HepG2 (cell line): ENCODE measurements at regions of chr3 and their contacts with region 1.

Region 1: GRCh38 chr3:159586571-159587202 is 401.9 kb upstream of the IL12A start:
- DNase-seq: peak; percentile 9
- ATAC-seq: peak; percentile 79
- H3K4me3 ChIP-seq: no peak overlapping the region
- H3K27ac ChIP-seq: no peak overlapping the region
- H3K4me1 ChIP-seq: no peaks in the 10 kb centered on the region
- H3K27me3 ChIP-seq: no peaks in the 10 kb centered on the region
- CTCF ChIP-seq: peak; percentile 64
- EP300 ChIP-seq: no peak
- POLR2A ChIP-seq: no peak
- RAD21 ChIP-seq: no peak

Region 2: GRCh38 chr3:158845765-158846350 is 740.8 kb before region 1 on chr3:
- CTCF ChIA-PET with region 1: interaction called, 3 read pairs
- POLR2A ChIA-PET with region 1: no interaction called
- in situ Hi-C with region 1: loop called (anchors 25 kb)
- intact Hi-C with region 1: no loop called
- DNase-seq: peak; percentile 41
- ATAC-seq: peak; percentile 76
- H3K4me3 ChIP-seq: no peak overlapping the region
- H3K27ac ChIP-seq: no peak overlapping the region
- H3K4me1 ChIP-seq: no peaks in the 10 kb centered on the region
- H3K27me3 ChIP-seq: peaks cover 0 to 10% of the 10 kb centered on the region in 2 experiments; a peak in 2 of 5 replicates
- CTCF ChIP-seq: peak; percentile 77
- EP300 ChIP-seq: no peak
- POLR2A ChIP-seq: no peak
- RAD21 ChIP-seq: peak; percentile 61

Region 3: DNA sequence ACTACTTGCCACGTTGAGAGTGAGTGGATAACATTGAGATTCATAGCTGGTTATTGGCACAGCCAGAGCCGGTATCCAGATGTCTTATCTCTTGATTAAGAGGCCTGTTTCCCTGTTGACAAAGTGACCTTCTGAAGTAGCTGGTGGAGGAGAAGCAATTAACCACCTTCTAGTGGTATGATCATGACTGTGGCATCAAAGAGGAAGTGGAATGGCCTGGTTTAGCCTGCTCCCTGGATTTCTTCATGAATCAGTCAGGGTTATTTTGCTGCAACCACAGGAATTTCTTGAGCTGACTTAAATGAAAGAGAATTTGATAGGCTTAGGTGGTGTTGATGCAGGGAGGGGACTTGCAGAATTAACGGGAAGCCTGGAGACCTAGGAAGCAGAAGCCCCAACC is 386.5 kb before region 1 on chr3:
- CTCF ChIA-PET with region 1: no interaction called
- POLR2A ChIA-PET with region 1: no interaction called
- in situ Hi-C with region 1: no loop called
- intact Hi-C with region 1: no loop called
- DNase-seq: no peak
- ATAC-seq: no peak
- H3K4me3 ChIP-seq: no peak overlapping the region
- H3K27ac ChIP-seq: no peak overlapping the region
- H3K4me1 ChIP-seq: no peaks in the 10 kb centered on the region
- H3K27me3 ChIP-seq: no peaks in the 10 kb centered on the region
- CTCF ChIP-seq: no peak
- EP300 ChIP-seq: no peak
- POLR2A ChIP-seq: no peak
- RAD21 ChIP-seq: no peak

Region 4: GRCh38 chr3:159536876-159537275 is 49.8 kb before region 1 on chr3:
- CTCF ChIA-PET with region 1: no interaction called
- POLR2A ChIA-PET with region 1: no interaction called
- in situ Hi-C with region 1: no loop called
- intact Hi-C with region 1: no loop called
- DNase-seq: no peak
- ATAC-seq: no peak
- H3K4me3 ChIP-seq: no peak overlapping the region
- H3K27ac ChIP-seq: no peak overlapping the region
- H3K4me1 ChIP-seq: no peaks in the 10 kb centered on the region
- H3K27me3 ChIP-seq: no peaks in the 10 kb centered on the region
- CTCF ChIP-seq: no peak
- EP300 ChIP-seq: no peak
- POLR2A ChIP-seq: no peak
- RAD21 ChIP-seq: no peak

Region 5: DNA sequence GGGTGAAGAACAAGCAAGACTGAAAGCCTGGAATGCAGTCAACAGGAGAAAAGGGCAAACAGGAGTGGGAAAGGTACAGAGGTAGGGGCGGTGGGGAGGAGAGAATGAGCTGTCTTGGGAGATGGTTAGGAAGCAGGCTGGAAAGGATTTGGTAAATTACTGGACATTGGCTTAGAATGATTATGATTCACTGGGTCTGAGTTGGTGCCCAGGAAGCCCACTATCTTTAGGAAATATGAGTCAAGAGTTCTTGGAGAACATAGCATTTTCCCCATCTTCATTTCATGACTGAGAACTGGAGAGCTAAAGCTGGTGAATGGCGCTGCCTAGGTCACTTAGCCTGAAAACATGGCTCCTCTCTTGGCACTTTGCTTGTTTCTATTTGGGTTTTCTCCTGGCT is 563.8 kb after region 1 on chr3:
- CTCF ChIA-PET with region 1: no interaction called
- POLR2A ChIA-PET with region 1: no interaction called
- in situ Hi-C with region 1: no loop called
- intact Hi-C with region 1: no loop called
- DNase-seq: no peak
- ATAC-seq: no peak
- H3K4me3 ChIP-seq: no peak overlapping the region
- H3K27ac ChIP-seq: no peak overlapping the region
- H3K4me1 ChIP-seq: no peaks in the 10 kb centered on the region
- H3K27me3 ChIP-seq: no peaks in the 10 kb centered on the region
- CTCF ChIP-seq: no peak
- EP300 ChIP-seq: no peak
- POLR2A ChIP-seq: no peak
- RAD21 ChIP-seq: no peak

Region 6: DNA sequence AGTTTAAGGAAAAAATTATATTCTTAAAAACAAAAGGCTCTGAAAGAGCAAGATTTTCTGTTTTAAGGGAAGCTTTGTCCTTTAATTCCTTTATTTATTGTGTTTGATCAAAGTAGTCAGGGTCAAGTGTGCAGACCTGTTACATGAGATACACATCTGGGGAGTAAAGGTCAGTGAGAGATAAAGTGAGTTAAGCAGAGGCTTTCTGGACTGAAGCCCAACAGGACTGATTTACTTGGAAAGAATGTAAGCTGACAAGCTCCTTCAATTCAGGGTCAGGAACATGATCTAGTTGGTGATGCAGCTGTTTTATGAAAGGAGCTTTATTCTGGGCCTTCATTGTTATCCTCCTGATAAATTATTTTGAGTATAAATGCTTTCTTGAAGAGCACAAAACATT is 1889.2 kb after region 1 on chr3:
- CTCF ChIA-PET with region 1: no interaction called
- POLR2A ChIA-PET with region 1: no interaction called
- in situ Hi-C with region 1: no loop called
- intact Hi-C with region 1: no loop called
- DNase-seq: peak; percentile 50
- ATAC-seq: no peak; the same call in 2 of the 3 replicates
- H3K4me3 ChIP-seq: no peak overlapping the region
- H3K27ac ChIP-seq: no peak overlapping the region
- H3K4me1 ChIP-seq: no peaks in the 10 kb centered on the region
- H3K27me3 ChIP-seq: no peaks in the 10 kb centered on the region
- CTCF ChIP-seq: no peak
- EP300 ChIP-seq: no peak
- POLR2A ChIP-seq: no peak
- RAD21 ChIP-seq: no peak